Activated B cell treated with CpG ODN at 0.5 μM for 24 hours (primary cell): ENCODE measurements at regions of chr17 and their contacts with region 1.

Region 1: DNA sequence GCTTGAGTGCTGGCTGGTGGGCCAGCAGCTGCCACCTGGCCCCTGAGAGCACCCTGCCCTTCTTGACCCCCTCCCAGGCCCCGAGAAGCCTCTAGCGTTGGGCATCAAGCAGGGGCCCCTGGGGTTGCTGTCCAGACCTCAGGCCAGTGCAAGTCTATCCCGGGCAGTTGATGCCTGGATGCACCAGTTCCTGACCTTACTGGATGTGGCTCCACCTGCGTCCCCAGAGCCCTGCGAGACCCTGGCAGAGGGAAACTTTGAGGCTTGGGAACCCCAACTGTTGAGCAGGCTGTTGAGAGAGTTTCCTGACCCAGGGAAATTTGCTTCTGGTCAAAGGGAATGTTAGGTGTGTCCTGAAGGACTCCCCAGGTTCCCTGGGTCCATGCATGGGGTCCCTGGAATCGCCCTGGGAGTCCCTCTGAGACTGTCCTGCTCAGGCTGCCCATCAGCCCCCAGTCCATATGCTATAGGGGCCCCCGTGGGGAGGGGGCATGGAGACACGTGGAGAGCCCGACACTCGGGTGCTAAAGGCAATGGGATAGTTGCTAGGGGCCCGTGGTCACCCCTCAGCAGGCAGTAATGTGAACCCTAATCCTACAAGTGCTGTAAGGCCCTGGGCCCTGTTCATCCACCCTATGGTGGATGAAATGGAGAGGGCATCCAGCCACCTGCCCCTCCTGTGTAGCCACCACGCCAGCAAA is 46.4 kb downstream of the RAB11FIP4 start:
- DNase-seq: no peak
- ATAC-seq: no peak
- H3K4me3 Mint-ChIP-seq: no peak overlapping the region
- H3K27ac Mint-ChIP-seq: no peak overlapping the region
- H3K4me1 Mint-ChIP-seq: peaks cover 2% of the 10 kb centered on the region
- H3K27me3 Mint-ChIP-seq: peaks cover 3% of the 10 kb centered on the region
- CTCF ChIP-seq: no peak

Region 2: DNA sequence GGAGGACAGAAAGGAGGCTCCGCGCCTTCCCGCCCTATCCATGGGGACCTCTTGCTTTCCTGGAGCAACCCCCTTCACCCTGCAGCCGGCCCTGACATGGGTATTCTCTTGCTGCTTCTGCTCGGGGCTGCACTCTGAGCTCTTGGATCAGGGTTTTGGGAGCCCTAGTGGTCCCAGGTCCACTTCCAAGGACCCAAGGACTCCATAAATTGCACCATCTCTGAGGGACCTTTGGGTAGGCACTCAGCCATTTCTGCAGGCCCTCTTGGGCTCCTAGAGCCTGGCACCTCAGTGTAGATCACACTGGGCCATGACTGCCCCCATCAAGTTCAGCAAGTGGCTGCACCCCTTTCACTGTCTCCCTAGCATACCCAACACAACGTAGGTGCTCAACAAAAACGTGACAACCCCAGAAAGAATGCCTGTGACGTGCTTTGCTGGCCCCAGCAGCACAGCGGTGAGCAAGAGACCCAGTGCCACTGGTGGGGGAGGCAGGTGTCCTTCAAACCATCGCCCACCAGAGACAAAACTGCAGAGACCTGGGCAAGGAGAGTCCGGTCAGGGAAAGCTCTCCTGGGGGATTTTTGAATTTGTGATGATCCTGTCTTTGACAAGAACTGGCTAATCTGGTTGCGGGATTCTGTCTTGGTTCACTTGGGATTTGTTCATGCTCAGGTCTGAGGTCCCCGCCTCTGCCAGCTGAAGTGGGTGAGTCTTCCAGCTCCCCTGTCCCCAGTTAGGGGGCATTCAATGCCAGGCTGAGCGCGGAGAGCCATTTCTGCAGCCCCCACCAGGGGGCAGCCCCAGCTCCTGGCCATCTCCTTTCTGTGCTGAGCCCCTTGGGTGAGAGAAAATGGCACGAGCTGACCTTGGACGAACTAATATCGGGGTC is 48.9 kb before region 1 on chr17:
- CTCF ChIA-PET with region 1: interaction called, 10 read pairs
- POLR2A ChIA-PET with region 1: no interaction called
- intact Hi-C with region 1: loop called (anchors 1 kb)
- DNase-seq: peak; percentile 46
- ATAC-seq: peak; percentile 76
- H3K4me3 Mint-ChIP-seq: no peak overlapping the region
- H3K27ac Mint-ChIP-seq: no peak overlapping the region
- H3K4me1 Mint-ChIP-seq: peaks cover 15% of the 10 kb centered on the region
- H3K27me3 Mint-ChIP-seq: peaks cover 31% of the 10 kb centered on the region
- CTCF ChIP-seq: no peak

Region 3: DNA sequence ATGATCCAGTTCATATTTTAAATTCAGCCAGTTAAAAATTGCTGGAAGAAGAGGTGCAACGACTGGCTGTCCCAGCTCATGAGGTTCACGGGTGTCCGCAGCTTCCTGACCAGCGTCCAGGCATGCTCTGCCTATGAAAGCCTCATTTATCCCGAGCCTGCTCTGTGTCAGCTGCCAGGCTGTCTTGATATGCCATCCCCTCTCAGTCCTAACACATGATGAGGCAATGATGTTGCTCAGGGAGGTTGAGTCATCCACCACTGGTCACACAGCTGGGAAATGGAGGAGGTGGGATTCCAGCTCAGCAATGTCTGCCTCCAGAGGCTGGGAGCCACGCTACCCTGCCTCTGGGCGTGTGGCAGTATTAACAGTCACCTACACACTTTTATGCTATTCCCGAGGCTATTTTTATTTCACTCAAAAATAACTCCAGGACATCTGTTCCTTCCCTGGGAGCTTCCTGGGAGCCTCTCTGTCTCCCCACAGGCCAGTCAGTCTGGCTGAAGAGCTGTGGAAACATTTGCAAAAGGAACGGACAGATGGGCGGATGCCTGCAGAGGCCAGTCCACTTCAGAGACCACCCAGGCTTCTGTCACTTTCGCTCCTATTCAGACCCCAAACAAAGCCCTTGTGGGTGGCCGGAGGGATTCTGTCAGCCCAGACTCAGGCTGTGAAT is 23.9 kb before region 1 on chr17:
- CTCF ChIA-PET with region 1: no interaction called
- POLR2A ChIA-PET with region 1: no interaction called
- intact Hi-C with region 1: no loop called
- DNase-seq: no peak
- ATAC-seq: no peak
- H3K4me3 Mint-ChIP-seq: no peak overlapping the region
- H3K27ac Mint-ChIP-seq: no peak overlapping the region
- H3K4me1 Mint-ChIP-seq: peaks cover 6% of the 10 kb centered on the region
- H3K27me3 Mint-ChIP-seq: peaks cover 7% of the 10 kb centered on the region
- CTCF ChIP-seq: no peak

Region 4: GRCh38 chr17:31508288-31509094 is 70.6 kb after region 1 on chr17:
- CTCF ChIA-PET with region 1: interaction called, 53 read pairs
- POLR2A ChIA-PET with region 1: no interaction called
- intact Hi-C with region 1: loop called (anchors 5 kb)
- DNase-seq: no peak
- ATAC-seq: peak; percentile 77
- H3K4me3 Mint-ChIP-seq: peak overlapping the region; percentile 88
- H3K27ac Mint-ChIP-seq: peak overlapping the region; percentile 96
- H3K4me1 Mint-ChIP-seq: peaks cover 65% of the 10 kb centered on the region
- H3K27me3 Mint-ChIP-seq: no peaks in the 10 kb centered on the region
- CTCF ChIP-seq: no peak

Region 5: GRCh38 chr17:31517524-31517923 is 79.7 kb after region 1 on chr17:
- CTCF ChIA-PET with region 1: interaction called, 155 read pairs
- POLR2A ChIA-PET with region 1: no interaction called
- intact Hi-C with region 1: loop called (anchors 2 kb)
- DNase-seq: no peak
- ATAC-seq: no peak
- H3K4me3 Mint-ChIP-seq: no peak overlapping the region
- H3K27ac Mint-ChIP-seq: peak overlapping the region; percentile 7
- H3K4me1 Mint-ChIP-seq: peaks cover 12% of the 10 kb centered on the region
- H3K27me3 Mint-ChIP-seq: no peaks in the 10 kb centered on the region
- CTCF ChIP-seq: no peak

Region 6: GRCh38 chr17:31524926-31525800 is 87.3 kb after region 1 on chr17:
- CTCF ChIA-PET with region 1: interaction called, 155 read pairs
- POLR2A ChIA-PET with region 1: interaction called, 5 read pairs
- intact Hi-C with region 1: loop called (anchors 1 kb)
- DNase-seq: peak; percentile 89
- ATAC-seq: peak; percentile 78
- H3K4me3 Mint-ChIP-seq: no peak overlapping the region
- H3K27ac Mint-ChIP-seq: peak overlapping the region; percentile 24
- H3K4me1 Mint-ChIP-seq: peaks cover 9% of the 10 kb centered on the region
- H3K27me3 Mint-ChIP-seq: no peaks in the 10 kb centered on the region
- CTCF ChIP-seq: peak; percentile 88

Region 7: GRCh38 chr17:31842183-31843069 is 404.6 kb after region 1 on chr17:
- CTCF ChIA-PET with region 1: interaction called, 42 read pairs
- POLR2A ChIA-PET with region 1: no interaction called
- intact Hi-C with region 1: loop called (anchors 1 kb)
- DNase-seq: peak; percentile 48
- ATAC-seq: peak; percentile 98
- H3K4me3 Mint-ChIP-seq: no peak overlapping the region
- H3K27ac Mint-ChIP-seq: no peak overlapping the region
- H3K4me1 Mint-ChIP-seq: no peaks in the 10 kb centered on the region
- H3K27me3 Mint-ChIP-seq: peaks cover 3% of the 10 kb centered on the region
- CTCF ChIP-seq: peak; percentile 51

Region 8: GRCh38 chr17:31900877-31901276 is 463.0 kb after region 1 on chr17:
- CTCF ChIA-PET with region 1: interaction called, 3 read pairs
- POLR2A ChIA-PET with region 1: no interaction called
- intact Hi-C with region 1: loop called (anchors 1 kb)
- DNase-seq: no peak
- ATAC-seq: no peak
- H3K4me3 Mint-ChIP-seq: no peak overlapping the region
- H3K27ac Mint-ChIP-seq: no peak overlapping the region
- H3K4me1 Mint-ChIP-seq: peaks cover 11% of the 10 kb centered on the region
- H3K27me3 Mint-ChIP-seq: no peaks in the 10 kb centered on the region
- CTCF ChIP-seq: no peak